Lower leg skin (tissue), 4 donors: ENCODE measurements at regions of chr11 and their contacts with region 1.

Region 1: GRCh38 chr11:85299258-85299942 is 327.7 kb downstream of the DLG2 start:
- DNase-seq: no peak
- H3K4me3 ChIP-seq: no peak overlapping the region
- CTCF ChIP-seq: no peak
- POLR2A ChIP-seq: no peak

Region 2: DNA sequence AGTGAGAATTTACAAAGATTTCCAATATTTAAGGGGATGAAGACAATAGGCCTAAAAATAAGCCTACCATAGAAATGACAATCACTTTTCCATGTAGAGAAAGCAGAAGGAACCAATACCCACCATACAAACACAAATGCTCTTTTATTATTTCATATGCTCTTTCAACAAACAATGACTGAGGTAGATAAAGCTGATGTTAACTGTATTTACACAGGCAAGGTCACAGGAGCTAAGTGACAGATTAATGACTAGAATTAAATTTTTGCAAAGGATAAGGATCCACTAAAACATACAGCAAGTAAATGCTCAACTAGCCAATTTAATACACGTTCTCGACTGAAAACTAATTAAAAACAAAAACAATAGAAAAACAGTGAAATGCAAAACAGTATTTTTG is 735.3 kb after region 1 on chr11:
- intact Hi-C with region 1: loop called (anchors 5 kb)
- DNase-seq: no peak
- H3K4me3 ChIP-seq: no peak overlapping the region
- CTCF ChIP-seq: no peak
- POLR2A ChIP-seq: no peak